ENCODE measurements at regions of chr15 and their contacts with region 1.

Region 1: DNA sequence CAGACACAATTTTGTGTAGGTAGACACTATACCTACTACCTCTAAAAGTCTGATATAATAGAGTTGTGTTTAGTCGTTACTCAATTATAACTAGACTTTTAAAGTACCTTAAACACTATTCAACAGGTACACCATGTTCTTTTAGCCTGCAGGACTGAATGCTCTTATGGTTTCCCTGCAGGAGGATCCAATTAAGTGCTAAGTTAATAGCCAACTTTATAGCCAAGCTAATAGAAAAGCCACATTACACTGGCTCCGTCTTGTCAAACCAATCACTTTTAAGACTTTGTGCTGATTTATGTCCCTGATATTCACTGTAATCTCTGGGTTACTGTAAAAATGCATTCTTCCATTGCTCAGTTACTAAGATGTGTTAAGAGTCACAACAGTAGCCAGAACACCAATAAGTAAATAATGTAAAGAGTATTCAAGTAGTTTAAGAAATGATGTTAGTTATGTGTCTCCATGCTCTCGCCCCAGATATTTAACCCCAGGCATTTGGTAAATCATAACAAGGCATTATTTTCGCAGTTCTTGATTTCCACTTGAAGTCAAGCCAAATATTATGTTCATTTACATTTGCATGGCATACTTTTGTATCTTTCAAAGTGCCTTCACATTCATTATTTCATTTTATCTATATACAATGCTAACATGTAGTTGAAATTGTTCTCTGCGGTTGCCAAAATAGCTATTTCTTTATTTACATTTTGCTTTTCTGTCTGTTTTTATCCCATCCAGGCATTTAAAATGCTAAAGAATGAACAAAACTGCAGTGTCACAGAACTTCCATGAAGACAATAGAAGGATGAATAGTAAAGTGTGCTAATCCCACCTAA is 42.7 kb upstream of the AP4E1 start:
- DNase-seq: no peak
- ATAC-seq: no peak
- H3K4me3 ChIP-seq: no peak overlapping the region
- H3K27ac ChIP-seq: no peak overlapping the region
- H3K4me1 ChIP-seq: no peaks in the 10 kb centered on the region
- H3K27me3 ChIP-seq: no peaks in the 10 kb centered on the region
- CTCF ChIP-seq: no peak

Region 2: GRCh38 chr15:50562735-50563640 is 302.7 kb before region 1 on chr15:
- intact Hi-C with region 1: no loop called
- DNase-seq: no peak
- ATAC-seq: peak in 1 of 8 donors; percentile 30
- H3K4me3 ChIP-seq: no peak overlapping the region
- H3K27ac ChIP-seq: no peak overlapping the region
- H3K4me1 ChIP-seq: no peaks in the 10 kb centered on the region
- H3K27me3 ChIP-seq: no peaks in the 10 kb centered on the region
- CTCF ChIP-seq: no peak

Region 3: GRCh38 chr15:50798684-50799083 is 67.0 kb before region 1 on chr15:
- intact Hi-C with region 1: loop called in 1 of 10 experiments (anchors 10 kb)
- DNase-seq: no peak
- ATAC-seq: no peak
- H3K4me3 ChIP-seq: no peak overlapping the region
- H3K27ac ChIP-seq: no peak overlapping the region
- H3K4me1 ChIP-seq: no peaks in the 10 kb centered on the region
- H3K27me3 ChIP-seq: no peaks in the 10 kb centered on the region
- CTCF ChIP-seq: no peak

Region 4: GRCh38 chr15:50813877-50814276 is 51.9 kb before region 1 on chr15:
- intact Hi-C with region 1: loop called in 1 of 10 experiments (anchors 10 kb)
- DNase-seq: no peak
- ATAC-seq: no peak
- H3K4me3 ChIP-seq: no peak overlapping the region
- H3K27ac ChIP-seq: no peak overlapping the region
- H3K4me1 ChIP-seq: no peaks in the 10 kb centered on the region
- H3K27me3 ChIP-seq: no peaks in the 10 kb centered on the region
- CTCF ChIP-seq: no peak

Region 5: DNA sequence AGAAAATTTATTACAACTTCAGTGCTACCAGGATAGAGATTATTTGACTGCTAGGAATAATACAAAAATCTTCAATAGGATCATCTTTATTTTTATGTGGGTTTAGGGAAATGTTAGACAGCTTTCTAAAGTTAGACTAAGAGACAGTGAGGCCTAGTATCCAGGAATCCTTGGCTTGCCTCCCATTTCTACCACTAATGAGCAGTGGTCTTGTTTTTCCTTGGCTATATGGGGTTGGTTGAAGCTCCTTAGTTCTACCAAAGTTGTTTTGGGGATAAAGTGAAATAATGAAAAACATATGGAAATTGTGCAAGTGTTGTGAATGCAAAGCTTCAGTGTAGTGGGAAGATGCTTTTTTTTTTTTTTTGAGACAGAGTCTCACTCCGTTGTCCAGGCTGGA is 59.5 kb after region 1 on chr15:
- intact Hi-C with region 1: no loop called
- DNase-seq: no peak
- ATAC-seq: no peak
- H3K4me3 ChIP-seq: no peak overlapping the region
- H3K27ac ChIP-seq: no peak overlapping the region
- H3K4me1 ChIP-seq: peaks cover 0 to 10% (median 0%) of the 10 kb centered on the region in 9 donors
- H3K27me3 ChIP-seq: no peaks in the 10 kb centered on the region
- CTCF ChIP-seq: no peak

Region 6: DNA sequence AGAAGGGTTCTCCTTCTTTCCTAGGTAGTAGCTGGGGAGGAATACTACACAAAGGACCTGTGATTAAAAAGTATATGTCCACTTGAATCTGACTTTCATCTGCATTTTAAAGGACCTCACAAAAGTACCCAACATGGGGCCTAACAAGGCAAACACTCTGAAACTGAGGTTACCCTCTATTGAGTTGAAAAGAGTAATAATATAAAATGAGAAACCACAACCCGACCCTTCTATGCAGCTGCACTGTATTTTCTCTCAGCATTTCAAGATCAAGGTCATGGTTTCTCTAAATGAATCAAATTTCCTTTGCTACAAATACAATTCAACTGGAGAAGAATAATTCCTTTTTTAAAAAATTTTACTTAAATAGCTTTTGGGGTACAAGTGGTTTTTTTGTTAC is 650.6 kb after region 1 on chr15:
- intact Hi-C with region 1: no loop called
- DNase-seq: no peak
- ATAC-seq: no peak
- H3K4me3 ChIP-seq: no peak overlapping the region
- H3K27ac ChIP-seq: no peak overlapping the region
- H3K4me1 ChIP-seq: no peaks in the 10 kb centered on the region
- H3K27me3 ChIP-seq: no peaks in the 10 kb centered on the region
- CTCF ChIP-seq: no peak

Measured in heart right ventricle (tissue), 16 donors.